ENCODE measurements at regions of chr5 and their contacts with region 1.

Region 1: DNA sequence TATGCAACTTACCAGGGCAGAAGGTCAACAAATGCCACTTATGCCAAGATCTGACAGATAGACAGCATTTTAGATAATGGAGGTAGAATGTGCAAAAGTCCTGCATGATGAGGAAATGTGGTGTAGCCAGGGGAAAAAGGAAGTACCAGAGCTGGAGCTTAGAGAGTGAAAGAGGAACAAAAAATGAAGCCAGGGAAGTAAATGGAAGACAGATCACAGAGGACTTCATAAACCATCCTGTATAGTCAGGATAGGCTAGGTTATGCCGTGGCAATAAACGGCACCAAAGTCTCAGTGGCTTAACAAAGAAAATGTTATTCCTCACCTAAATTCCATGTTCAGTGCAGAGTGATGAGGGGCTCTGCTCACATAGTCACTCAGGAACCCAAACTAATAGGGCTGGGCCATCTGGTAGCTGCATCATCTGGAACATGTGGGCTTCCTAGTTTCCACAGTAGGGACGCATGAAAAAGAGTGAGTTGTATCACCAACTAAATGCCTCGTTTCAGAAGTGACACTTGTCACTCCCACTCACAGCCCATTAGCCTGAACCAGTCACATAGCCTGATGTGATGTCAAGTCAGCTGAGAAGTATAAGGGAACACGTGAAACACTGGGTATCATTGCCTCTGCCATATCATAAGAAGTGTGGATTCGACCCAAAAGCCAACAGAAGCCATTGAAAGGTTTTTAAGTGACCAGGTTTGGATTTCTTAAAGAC is 70.3 kb downstream of the SH3RF2 start:
- DNase-seq: no peak
- H3K4me3 Mint-ChIP-seq: no peak overlapping the region
- H3K27ac Mint-ChIP-seq: no peak overlapping the region
- H3K4me1 Mint-ChIP-seq: no peaks in the 10 kb centered on the region
- H3K27me3 Mint-ChIP-seq: peaks cover 10% of the 10 kb centered on the region

Region 2: GRCh38 chr5:146027751-146028150 is 21.1 kb after region 1 on chr5:
- intact Hi-C with region 1: loop called (anchors 1 kb)
- DNase-seq: no peak
- H3K4me3 Mint-ChIP-seq: no peak overlapping the region
- H3K27ac Mint-ChIP-seq: no peak overlapping the region
- H3K4me1 Mint-ChIP-seq: no peaks in the 10 kb centered on the region
- H3K27me3 Mint-ChIP-seq: peaks cover 11% of the 10 kb centered on the region

Measured in activated T-helper 1 cell treated with anti-CD3 and anti-CD28 coated beads, Interleukin-12 subunit alpha, Interleukin-12 subunit beta, Interleukin-2, Interleukin-4 antibody, amounts not matched to agents 30 ng/mL and 10 ng/mL and 1 ng/mL, durations not matched to agents 14 hours and 24 hours and 36 hours (primary cell).